CD8-positive, alpha-beta T cell (primary cell): ENCODE measurements at regions of chrX and their contacts with region 1.

Region 1: DNA sequence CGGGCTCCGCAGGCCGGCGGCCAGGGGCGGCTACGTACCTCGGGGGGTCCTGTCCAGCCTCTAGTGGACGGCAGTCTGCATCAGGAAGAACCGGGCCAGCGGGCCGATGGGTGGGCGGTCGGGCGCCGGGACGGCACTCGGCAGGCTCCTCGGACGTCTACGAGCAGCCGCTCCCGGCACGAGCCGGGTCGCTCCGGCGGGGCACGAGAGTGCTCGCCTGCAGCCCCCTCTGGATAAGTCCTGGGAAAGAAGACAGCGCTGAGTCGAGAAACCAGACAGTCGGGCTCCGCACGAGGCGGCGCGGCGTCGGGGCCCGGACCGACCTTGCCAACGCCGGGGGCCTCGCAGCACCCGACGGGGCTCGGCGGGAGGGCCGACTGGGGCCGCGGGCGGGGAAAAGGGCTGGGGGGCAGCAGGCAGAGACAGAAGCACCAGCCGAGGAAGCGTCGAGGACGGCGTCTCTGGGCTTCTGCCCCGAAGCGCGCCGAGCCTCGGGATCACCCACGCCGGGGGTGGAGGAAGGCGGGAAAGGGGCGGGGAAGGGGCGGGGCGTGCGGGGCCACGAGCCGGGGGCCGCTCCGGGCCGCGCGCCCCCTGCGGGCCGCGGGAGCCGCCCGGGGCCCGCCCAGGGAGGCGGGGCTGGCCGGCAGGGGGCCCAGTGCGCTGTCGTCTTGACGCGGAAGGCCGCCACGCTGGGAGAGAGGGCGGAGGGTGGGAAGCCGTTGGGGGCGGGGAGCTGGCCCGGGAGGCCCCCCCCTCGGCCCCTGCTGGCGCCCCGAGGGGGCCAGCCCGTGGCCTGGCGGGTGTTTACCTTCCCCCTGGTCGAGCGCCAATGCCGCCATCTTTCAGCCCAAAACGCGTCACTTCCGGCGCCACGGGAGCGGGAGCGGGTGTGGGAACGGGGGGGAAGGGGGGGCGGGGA is 1.9 kb downstream of the KLHL15 start:
- DNase-seq: peak; percentile 62 to 89 (median 75)
- ATAC-seq: peak; percentile 90
- H3K4me3 ChIP-seq: peak overlapping the region; percentile 67 to 82
- H3K4me3 Mint-ChIP-seq: peak overlapping the region; percentile 87
- H3K27ac ChIP-seq: peak overlapping the region; percentile 85 to 87
- H3K27ac Mint-ChIP-seq: peak overlapping the region; percentile 64
- H3K4me1 ChIP-seq: peaks cover 13% of the 10 kb centered on the region
- H3K4me1 Mint-ChIP-seq: peaks cover 24% of the 10 kb centered on the region
- H3K27me3 ChIP-seq: no peaks in the 10 kb centered on the region
- H3K27me3 Mint-ChIP-seq: no peaks in the 10 kb centered on the region
- CTCF ChIP-seq: no peak

Region 2: DNA sequence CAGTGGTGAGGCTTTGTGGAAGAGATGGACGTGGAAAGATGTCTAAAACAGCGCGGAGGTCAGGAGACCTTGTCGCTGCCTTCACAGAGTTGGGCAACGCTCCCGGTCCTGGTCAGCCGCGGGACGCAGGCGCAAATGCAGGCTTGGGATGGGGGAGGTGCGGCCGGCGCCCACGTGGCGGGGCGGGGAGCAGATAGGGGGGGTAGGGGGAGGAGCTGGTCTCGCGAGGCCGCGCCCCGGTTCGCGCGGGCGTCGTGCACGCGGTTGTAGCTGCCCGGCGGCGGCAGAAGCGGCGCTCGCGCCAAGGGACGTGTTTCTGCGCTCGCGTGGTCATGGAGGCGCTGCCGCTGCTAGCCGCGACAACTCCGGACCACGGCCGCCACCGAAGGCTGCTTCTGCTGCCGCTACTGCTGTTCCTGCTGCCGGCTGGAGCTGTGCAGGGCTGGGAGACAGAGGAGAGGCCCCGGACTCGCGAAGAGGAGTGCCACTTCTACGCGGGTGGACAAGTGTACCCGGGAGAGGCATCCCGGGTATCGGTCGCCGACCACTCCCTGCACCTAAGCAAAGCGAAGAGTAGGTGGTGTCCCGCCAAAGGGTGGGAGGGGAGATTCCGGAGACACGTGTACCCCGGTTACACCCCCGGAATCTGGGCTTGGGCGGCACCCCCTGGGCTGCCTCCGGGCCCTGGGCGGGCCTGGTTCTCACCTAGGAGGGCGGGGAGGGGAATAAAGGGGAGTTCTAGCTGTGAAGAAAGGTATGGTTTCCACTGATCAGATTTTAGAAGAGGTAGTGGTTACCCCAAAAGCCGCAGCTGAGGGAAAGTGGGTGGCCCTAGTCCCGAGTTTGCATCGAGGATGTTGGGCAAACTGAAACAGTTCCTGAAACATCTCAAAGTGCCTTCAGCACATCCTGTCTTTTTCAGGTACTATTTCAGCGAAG is 357.6 kb before region 1 on chrX and contains the start of gene PRDX4:
- CTCF ChIA-PET with region 1: no interaction called
- POLR2A ChIA-PET with region 1: interaction called, 3 read pairs
- intact Hi-C with region 1: loop called (anchors 1 to 10 kb)
- DNase-seq: peak; percentile 37 to 84 (median 64)
- ATAC-seq: peak; percentile 85
- H3K4me3 ChIP-seq: peak within 1 kb of the TSS; percentile 62 to 67
- H3K4me3 Mint-ChIP-seq: peak within 1 kb of the TSS; percentile 92
- H3K27ac ChIP-seq: peak within 1 kb of the TSS; percentile 66 to 68
- H3K27ac Mint-ChIP-seq: peak within 1 kb of the TSS; percentile 86
- H3K4me1 ChIP-seq: peaks cover 11% of the 10 kb centered on the region
- H3K4me1 Mint-ChIP-seq: peaks cover 25% of the 10 kb centered on the region
- H3K27me3 ChIP-seq: no peaks in the 10 kb centered on the region
- H3K27me3 Mint-ChIP-seq: no peaks in the 10 kb centered on the region
- CTCF ChIP-seq: no peak
- total RNA-seq, gene PRDX4: 2.2 to 3.6 TPM

Region 3: DNA sequence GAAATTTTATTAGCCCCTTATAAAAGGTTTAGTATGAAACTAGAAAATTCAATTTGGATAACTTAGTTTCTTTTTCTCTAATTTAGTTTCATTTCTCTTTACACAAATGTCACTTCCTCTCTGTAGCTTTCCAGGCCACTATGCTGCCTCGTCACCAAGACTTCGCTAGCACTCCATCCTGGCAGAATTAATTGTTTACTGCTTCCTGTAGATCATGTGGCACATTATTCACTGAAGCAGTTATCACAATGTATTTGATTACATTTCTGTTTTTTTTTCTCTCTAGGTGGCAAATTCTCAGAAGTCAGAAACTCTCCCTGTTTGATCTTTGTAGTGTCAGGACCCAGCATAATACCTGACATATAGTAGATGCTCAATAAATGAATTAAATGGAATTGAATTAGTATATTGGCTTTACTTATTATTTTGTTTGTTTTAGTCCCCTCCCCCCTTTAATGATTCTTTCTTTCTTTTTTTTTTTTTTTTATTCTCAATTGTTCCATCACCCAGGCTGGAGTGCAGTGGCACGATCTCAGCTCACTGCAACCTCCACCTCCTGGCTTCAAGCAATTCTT is 251.4 kb before region 1 on chrX:
- CTCF ChIA-PET with region 1: no interaction called
- POLR2A ChIA-PET with region 1: no interaction called
- intact Hi-C with region 1: loop called in 1 of 2 experiments (anchors 5 kb)
- DNase-seq: peak in 7 of 9 experiments; percentile 6 to 86 (median 42)
- ATAC-seq: peak; percentile 97
- H3K4me3 ChIP-seq: peak overlapping the region; percentile 19 to 55
- H3K4me3 Mint-ChIP-seq: peak overlapping the region; percentile 69
- H3K27ac ChIP-seq: peak overlapping the region; percentile 74 to 94
- H3K27ac Mint-ChIP-seq: peak overlapping the region; percentile 93
- H3K4me1 ChIP-seq: peaks cover 6% of the 10 kb centered on the region
- H3K4me1 Mint-ChIP-seq: peaks cover 10% of the 10 kb centered on the region
- H3K27me3 ChIP-seq: no peaks in the 10 kb centered on the region
- H3K27me3 Mint-ChIP-seq: no peaks in the 10 kb centered on the region
- CTCF ChIP-seq: no peak

Region 4: GRCh38 chrX:23838953-23839352 is 186.1 kb before region 1 on chrX:
- CTCF ChIA-PET with region 1: no interaction called
- POLR2A ChIA-PET with region 1: no interaction called
- intact Hi-C with region 1: no loop called
- DNase-seq: no peak
- ATAC-seq: no peak
- H3K4me3 ChIP-seq: no peak overlapping the region
- H3K4me3 Mint-ChIP-seq: no peak overlapping the region
- H3K27ac ChIP-seq: no peak overlapping the region
- H3K27ac Mint-ChIP-seq: no peak overlapping the region
- H3K4me1 ChIP-seq: no peaks in the 10 kb centered on the region
- H3K4me1 Mint-ChIP-seq: no peaks in the 10 kb centered on the region
- H3K27me3 ChIP-seq: no peaks in the 10 kb centered on the region
- H3K27me3 Mint-ChIP-seq: no peaks in the 10 kb centered on the region
- CTCF ChIP-seq: no peak

Region 5: GRCh38 chrX:23952984-23953907 is 71.8 kb before region 1 on chrX:
- CTCF ChIA-PET with region 1: no interaction called
- POLR2A ChIA-PET with region 1: interaction called, 5 read pairs
- intact Hi-C with region 1: loop called (anchors 2 to 10 kb)
- DNase-seq: peak; percentile 0 to 72 (median 32)
- ATAC-seq: peak; percentile 83
- H3K4me3 ChIP-seq: peak overlapping the region; percentile 47 to 51
- H3K4me3 Mint-ChIP-seq: peak overlapping the region; percentile 86
- H3K27ac ChIP-seq: peak overlapping the region; percentile 70 to 76
- H3K27ac Mint-ChIP-seq: peak overlapping the region; percentile 95
- H3K4me1 ChIP-seq: peaks cover 11% of the 10 kb centered on the region
- H3K4me1 Mint-ChIP-seq: peaks cover 27% of the 10 kb centered on the region
- H3K27me3 ChIP-seq: no peaks in the 10 kb centered on the region
- H3K27me3 Mint-ChIP-seq: no peaks in the 10 kb centered on the region
- CTCF ChIP-seq: no peak

Region 6: GRCh38 chrX:23993012-23993633 is 32.0 kb before region 1 on chrX:
- CTCF ChIA-PET with region 1: no interaction called
- POLR2A ChIA-PET with region 1: no interaction called
- intact Hi-C with region 1: no loop called
- DNase-seq: no peak
- ATAC-seq: no peak
- H3K4me3 ChIP-seq: no peak overlapping the region
- H3K4me3 Mint-ChIP-seq: no peak overlapping the region
- H3K27ac ChIP-seq: no peak overlapping the region
- H3K27ac Mint-ChIP-seq: no peak overlapping the region
- H3K4me1 ChIP-seq: no peaks in the 10 kb centered on the region
- H3K4me1 Mint-ChIP-seq: peaks cover 24% of the 10 kb centered on the region
- H3K27me3 ChIP-seq: no peaks in the 10 kb centered on the region
- H3K27me3 Mint-ChIP-seq: no peaks in the 10 kb centered on the region
- CTCF ChIP-seq: no peak

Region 7: DNA sequence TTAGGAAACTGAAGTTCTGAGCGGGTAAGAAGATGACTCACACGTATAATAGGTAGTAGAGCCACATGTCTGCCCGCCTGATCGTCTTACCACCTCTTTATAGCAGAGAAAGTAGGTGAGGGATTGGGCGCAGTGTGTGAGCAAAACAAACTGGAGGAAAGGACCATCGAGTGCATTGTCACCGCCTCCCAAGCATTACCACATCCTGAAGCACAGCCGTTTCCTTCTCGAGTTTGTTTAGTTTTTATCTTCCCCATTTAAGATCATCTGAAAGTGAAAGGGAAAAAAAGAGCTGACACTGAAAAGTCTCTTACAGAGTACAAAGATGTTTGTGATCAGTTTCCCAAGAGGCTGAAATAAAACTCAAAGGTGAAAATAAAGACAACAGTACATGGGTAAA is 454.8 kb after region 1 on chrX:
- CTCF ChIA-PET with region 1: no interaction called
- POLR2A ChIA-PET with region 1: no interaction called
- intact Hi-C with region 1: loop called in 1 of 2 experiments (anchors 10 kb)
- DNase-seq: peak; percentile 47 to 94 (median 73)
- ATAC-seq: peak; percentile 94
- H3K4me3 ChIP-seq: peak overlapping the region; percentile 38 to 55
- H3K4me3 Mint-ChIP-seq: peak overlapping the region; percentile 80
- H3K27ac ChIP-seq: peak overlapping the region; percentile 78 to 95
- H3K27ac Mint-ChIP-seq: peak overlapping the region; percentile 97
- H3K4me1 ChIP-seq: peaks cover 62% of the 10 kb centered on the region
- H3K4me1 Mint-ChIP-seq: peaks cover 75% of the 10 kb centered on the region
- H3K27me3 ChIP-seq: no peaks in the 10 kb centered on the region
- H3K27me3 Mint-ChIP-seq: no peaks in the 10 kb centered on the region
- CTCF ChIP-seq: no peak